ENCODE measurements at regions of chr9 and their contacts with region 1.

Region 1: GRCh38 chr9:21770877-21771560 is 31.4 kb upstream of the MTAP start:
- DNase-seq: no peak
- ATAC-seq: peak in 1 of 8 donors; percentile 33
- H3K4me3 ChIP-seq: no peak overlapping the region
- H3K27ac ChIP-seq: no peak overlapping the region
- H3K4me1 ChIP-seq: peaks cover 0 to 4% (median 0%) of the 10 kb centered on the region in 9 donors
- H3K27me3 ChIP-seq: peaks cover 0 to 19% (median 0%) of the 10 kb centered on the region in 7 donors
- CTCF ChIP-seq: no peak

Region 2: GRCh38 chr9:21709464-21710058 is 61.5 kb before region 1 on chr9:
- intact Hi-C with region 1: loop called in 1 of 10 experiments (anchors 10 kb)
- DNase-seq: peak in 1 of 2 donors; percentile 34
- ATAC-seq: peak in 1 of 8 donors; percentile 16
- H3K4me3 ChIP-seq: no peak overlapping the region
- H3K27ac ChIP-seq: no peak overlapping the region
- H3K4me1 ChIP-seq: no peaks in the 10 kb centered on the region
- H3K27me3 ChIP-seq: peaks cover 0 to 17% (median 13%) of the 10 kb centered on the region in 7 donors
- CTCF ChIP-seq: peak; percentile 20 to 80 (median 73)